ENCODE measurements at regions of chr15 and their contacts with region 1.

Region 1: DNA sequence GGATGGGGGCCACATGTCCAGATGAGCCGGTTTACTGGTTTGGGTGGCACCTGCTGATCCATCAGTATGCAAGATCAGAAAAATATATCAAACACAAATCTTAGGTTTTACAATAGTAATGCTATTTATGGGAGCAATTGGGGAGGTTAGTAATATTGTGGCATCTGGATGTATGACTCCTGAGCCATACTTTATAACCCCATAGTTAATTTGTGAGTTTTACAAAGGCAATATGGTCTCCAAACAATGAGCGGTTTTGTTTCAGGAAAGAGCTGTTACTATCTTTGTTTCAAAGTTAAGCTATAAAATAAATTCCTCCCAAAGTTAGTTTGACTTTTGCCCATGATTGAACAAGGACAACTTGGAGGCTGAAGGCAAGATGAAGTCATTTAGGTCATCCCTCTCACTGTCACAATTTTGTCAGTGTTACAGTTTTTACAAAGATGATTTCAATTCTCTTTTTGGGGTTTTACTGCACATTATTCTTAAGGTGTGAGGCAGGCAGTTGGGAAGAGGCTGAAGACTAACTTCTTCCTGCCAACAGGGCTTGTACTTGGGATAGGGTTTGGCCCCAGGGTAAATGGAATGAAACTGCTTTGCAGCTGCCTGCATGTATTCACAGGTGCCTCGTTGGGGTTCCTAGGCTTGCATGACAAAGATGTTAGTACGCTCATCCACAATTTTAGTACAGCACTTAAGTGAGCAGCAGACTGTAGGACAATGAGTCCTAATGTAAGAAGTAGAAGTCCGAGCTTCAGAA is 296.6 kb upstream of the NDN start:
- DNase-seq: no peak
- H3K4me3 ChIP-seq: no peak overlapping the region
- H3K27ac ChIP-seq: no peak overlapping the region
- H3K4me1 ChIP-seq: no peaks in the 10 kb centered on the region
- H3K27me3 ChIP-seq: no peaks in the 10 kb centered on the region
- CTCF ChIP-seq: no peak

Region 2: GRCh38 chr15:23835953-23836352 is 147.7 kb before region 1 on chr15:
- CTCF ChIA-PET with region 1: no interaction called
- POLR2A ChIA-PET with region 1: no interaction called
- intact Hi-C with region 1: no loop called
- DNase-seq: no peak
- H3K4me3 ChIP-seq: no peak overlapping the region
- H3K27ac ChIP-seq: no peak overlapping the region
- H3K4me1 ChIP-seq: no peaks in the 10 kb centered on the region
- H3K27me3 ChIP-seq: no peaks in the 10 kb centered on the region
- CTCF ChIP-seq: no peak

Region 3: GRCh38 chr15:23924688-23925087 is 59.0 kb before region 1 on chr15:
- CTCF ChIA-PET with region 1: no interaction called
- POLR2A ChIA-PET with region 1: no interaction called
- intact Hi-C with region 1: no loop called
- DNase-seq: no peak
- H3K4me3 ChIP-seq: no peak overlapping the region
- H3K27ac ChIP-seq: no peak overlapping the region
- H3K4me1 ChIP-seq: no peaks in the 10 kb centered on the region
- H3K27me3 ChIP-seq: no peaks in the 10 kb centered on the region
- CTCF ChIP-seq: no peak

Region 4: GRCh38 chr15:24039683-24040082 is 56.0 kb after region 1 on chr15:
- CTCF ChIA-PET with region 1: no interaction called
- POLR2A ChIA-PET with region 1: no interaction called
- intact Hi-C with region 1: loop called (anchors 10 kb)
- DNase-seq: no peak
- H3K4me3 ChIP-seq: no peak overlapping the region
- H3K27ac ChIP-seq: no peak overlapping the region
- H3K4me1 ChIP-seq: no peaks in the 10 kb centered on the region
- H3K27me3 ChIP-seq: no peaks in the 10 kb centered on the region
- CTCF ChIP-seq: no peak

Measured in A673 (cell line).